ENCODE measurements at regions of chr18 and their contacts with region 1.

Region 1: DNA sequence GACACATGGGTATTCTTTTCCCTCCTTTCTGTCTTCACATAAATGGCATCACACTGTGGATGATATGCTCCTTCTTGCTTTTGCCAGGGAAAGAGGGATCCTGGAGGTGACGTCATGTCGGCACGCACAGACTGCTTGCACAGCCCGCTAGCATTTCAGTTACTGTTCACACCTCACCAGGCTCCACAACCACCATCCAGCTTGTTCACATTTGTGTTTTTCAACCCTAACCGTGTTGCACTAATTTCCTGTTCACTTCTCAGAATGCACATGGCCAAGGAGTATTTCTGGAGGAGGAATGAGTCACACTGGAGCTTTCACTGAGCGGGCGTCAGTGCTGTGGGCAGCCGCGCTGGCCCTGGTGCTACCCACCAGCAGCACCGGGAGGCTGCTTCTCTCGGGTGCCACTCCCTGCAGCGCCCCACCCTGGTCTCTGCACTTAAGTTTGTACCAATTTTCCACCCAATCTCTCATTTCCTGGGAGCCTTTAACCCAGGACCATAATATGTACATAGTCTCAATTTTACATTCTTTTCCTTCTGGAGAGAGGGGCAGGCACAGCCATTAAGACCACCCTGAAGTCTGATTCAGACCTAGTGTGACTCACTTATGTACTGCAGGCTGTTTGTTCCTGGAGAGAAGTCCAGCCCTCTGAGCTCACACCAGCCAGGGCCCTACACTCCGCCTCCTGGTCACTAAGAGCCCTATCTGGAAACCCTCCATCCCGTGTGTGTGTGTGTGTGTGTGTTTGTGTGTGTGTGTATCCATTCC is 65.1 kb downstream of the MBP start:
- DNase-seq: peak; percentile 82
- H3K4me3 Mint-ChIP-seq: peak overlapping the region; percentile 53
- H3K27ac Mint-ChIP-seq: peak overlapping the region; percentile 99
- H3K4me1 Mint-ChIP-seq: peaks cover 100% of the 10 kb centered on the region
- H3K27me3 Mint-ChIP-seq: no peaks in the 10 kb centered on the region

Region 2: DNA sequence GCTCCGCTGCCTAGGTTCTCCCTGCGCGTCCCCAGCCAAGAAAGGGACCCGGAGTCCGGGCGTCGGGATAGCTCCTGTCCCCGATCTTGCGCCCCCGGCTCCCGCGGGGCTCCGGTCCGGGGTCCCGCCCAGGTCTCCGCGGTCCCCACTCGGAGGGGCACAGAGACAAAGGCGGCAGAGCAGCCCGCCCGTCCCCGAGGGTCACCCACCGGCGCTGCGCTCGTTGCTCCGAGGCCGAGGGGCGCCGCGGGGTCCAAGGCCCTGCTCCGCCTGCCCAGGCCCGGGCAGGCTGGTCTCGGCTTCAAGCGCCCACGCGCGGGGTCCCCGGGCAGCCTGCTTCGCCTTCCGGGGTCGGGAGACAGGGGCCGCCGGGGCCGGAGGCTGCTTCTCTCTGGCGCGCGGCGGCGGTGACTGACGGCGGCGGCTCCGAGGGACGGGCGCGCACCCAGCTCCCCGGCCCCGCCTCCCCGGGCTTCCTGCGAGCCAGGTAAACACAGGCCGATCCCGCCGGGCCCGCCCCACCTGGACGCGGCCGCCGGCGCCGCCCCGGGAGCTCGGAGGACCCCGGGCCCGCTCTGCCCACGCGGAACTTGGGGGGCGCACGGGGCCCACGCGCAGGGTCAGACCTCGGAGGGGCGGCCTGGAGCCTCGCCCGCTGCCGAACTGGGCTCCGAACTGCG is 65.0 kb after region 1 on chr18 and contains the start of gene MBP:
- CTCF ChIA-PET with region 1: interaction called, 15 read pairs
- POLR2A ChIA-PET with region 1: interaction called, 326 read pairs
- DNase-seq: peak; percentile 80
- H3K4me3 Mint-ChIP-seq: peak within 1 kb of the TSS; percentile 96
- H3K27ac Mint-ChIP-seq: peak within 1 kb of the TSS; percentile 88
- H3K4me1 Mint-ChIP-seq: peaks cover 62% of the 10 kb centered on the region
- H3K27me3 Mint-ChIP-seq: no peaks in the 10 kb centered on the region
- total RNA-seq, gene MBP: 81.4 to 95.3 TPM

Region 3: GRCh38 chr18:77208964-77209363 is 141.5 kb after region 1 on chr18:
- CTCF ChIA-PET with region 1: interaction called, 29 read pairs
- POLR2A ChIA-PET with region 1: interaction called, 5 read pairs
- DNase-seq: peak; percentile 33
- H3K4me3 Mint-ChIP-seq: peak overlapping the region; percentile 83
- H3K27ac Mint-ChIP-seq: peak overlapping the region; percentile 84
- H3K4me1 Mint-ChIP-seq: peaks cover 50% of the 10 kb centered on the region
- H3K27me3 Mint-ChIP-seq: no peaks in the 10 kb centered on the region

Measured in activated CD4-positive, alpha-beta memory T cell treated with anti-CD3 and anti-CD28 coated beads, Interleukin-2, amount 10 ng/mL, durations not matched to agents 7 days and 5 days (primary cell).